Sciatic nerve (tissue), 2 donors: ENCODE measurements at regions of chr13 and their contacts with region 1.

Region 1: GRCh38 chr13:103246581-103247200 is 180.5 kb upstream of the SLC10A2 start:
- DNase-seq: no peak
- ATAC-seq: no peak

Region 2: GRCh38 chr13:102117175-102117828 is 1129.4 kb before region 1 on chr13:
- intact Hi-C with region 1: loop called (anchors 5 kb)
- DNase-seq: no peak
- ATAC-seq: no peak